Activated CD8-positive, alpha-beta memory T cell treated with anti-CD3 and anti-CD28 coated beads, Interleukin-2, amount 10 ng/mL, durations not matched to agents 7 days and 5 days (primary cell): ENCODE measurements at regions of chr1 and their contacts with region 1.

Region 1: DNA sequence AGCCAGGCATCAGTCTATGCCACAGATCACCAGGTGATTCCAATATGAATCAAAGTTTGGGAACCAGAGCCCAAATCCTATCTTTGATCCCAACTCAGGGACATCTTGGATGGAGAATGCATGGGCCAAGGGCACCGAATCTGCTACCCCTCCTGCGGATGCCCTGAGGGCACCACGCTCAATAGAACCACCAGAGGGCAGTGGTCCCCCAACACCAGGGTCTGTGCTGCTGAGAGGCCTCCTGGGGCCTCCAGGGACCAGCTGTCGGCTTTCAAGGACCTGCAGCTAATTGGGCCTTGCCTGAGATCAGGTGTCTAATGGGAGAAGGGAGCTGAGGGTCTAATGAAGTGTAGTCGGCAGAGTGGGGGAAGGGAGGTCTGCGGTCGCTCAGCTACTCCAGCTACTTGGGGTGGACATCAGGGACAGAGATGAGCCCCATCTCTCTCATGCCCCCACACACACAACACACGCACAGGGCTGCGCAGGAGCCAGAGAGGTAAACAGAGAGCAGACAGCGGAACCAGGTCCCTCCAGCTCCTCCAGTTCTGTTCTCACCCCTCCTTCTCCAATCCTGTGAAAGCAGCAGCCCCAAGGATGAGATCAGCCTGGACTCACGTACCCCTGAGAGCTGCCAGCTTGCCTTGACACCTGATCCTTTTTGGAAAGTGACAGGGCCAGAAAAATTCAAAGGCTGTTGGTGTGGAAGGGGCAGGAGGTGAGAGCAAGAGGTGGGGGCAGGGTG is 34.9 kb upstream of the PPP1R15B start:
- DNase-seq: peak; percentile 84
- ATAC-seq: peak; percentile 93
- H3K4me3 Mint-ChIP-seq: no peak overlapping the region
- H3K27ac Mint-ChIP-seq: peak overlapping the region; percentile 74
- H3K4me1 Mint-ChIP-seq: peaks cover 33% of the 10 kb centered on the region
- H3K27me3 Mint-ChIP-seq: no peaks in the 10 kb centered on the region

Region 2: DNA sequence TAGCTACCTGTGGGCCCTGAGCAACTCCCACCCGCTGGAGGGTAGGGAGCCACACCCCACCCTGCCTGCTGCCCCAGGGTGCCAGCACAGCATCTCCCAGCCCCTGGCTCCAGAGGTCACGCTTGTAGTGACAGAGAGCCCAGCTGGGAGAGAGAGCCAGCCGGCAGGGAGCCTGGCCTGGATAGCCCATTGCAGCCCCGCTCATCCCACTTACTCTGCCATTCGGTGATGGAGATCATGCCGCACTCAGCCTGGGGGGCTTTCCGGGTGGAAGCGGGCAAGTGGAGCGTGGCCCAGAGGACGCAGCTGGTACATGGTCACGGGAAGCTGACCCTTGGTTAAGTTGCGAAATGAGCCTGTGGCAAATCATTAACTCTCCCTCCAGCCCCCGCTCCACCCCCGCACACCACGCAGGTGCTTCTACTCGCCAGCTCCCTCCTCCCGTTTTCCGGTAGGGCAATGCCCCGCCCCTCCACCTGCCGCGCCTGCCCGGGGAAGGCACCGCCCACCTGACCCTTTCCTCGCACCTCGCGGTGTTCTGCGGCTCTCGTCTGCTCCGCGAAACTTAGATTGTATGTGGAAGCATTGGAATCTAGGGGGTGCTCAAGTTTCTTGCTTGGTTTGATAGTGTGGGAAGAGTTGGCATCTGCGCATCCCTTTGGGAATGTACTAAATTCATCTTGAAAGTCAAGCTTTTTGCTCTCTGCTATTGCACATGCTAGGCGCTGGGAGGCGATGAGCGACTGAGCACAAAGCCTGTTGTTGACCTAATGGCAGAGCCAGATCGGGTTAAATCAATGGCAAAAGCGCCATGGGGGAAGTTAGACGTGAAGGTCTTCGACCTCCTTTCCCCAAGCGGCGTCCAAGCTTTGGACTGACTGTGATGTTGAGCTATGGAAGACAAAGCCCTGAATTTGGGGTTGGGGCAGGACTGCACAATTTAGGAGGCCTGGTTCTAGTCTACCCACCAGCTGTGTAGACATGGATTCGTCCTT is 232.6 kb before region 1 on chr1 and contains the start of gene GOLT1A:
- CTCF ChIA-PET with region 1: no interaction called
- DNase-seq: peak; percentile 53
- ATAC-seq: peak; percentile 42
- H3K4me3 Mint-ChIP-seq: peak within 1 kb of the TSS; percentile 5
- H3K27ac Mint-ChIP-seq: no peak within 1 kb of the TSS
- H3K4me1 Mint-ChIP-seq: peaks cover 15% of the 10 kb centered on the region
- H3K27me3 Mint-ChIP-seq: peaks cover 23% of the 10 kb centered on the region
- total RNA-seq, gene GOLT1A: not detected

Region 3: GRCh38 chr1:204431310-204432165 is 15.0 kb before region 1 on chr1:
- CTCF ChIA-PET with region 1: interaction called, 174 read pairs
- DNase-seq: peak; percentile 85
- ATAC-seq: peak; percentile 88
- H3K4me3 Mint-ChIP-seq: no peak overlapping the region
- H3K27ac Mint-ChIP-seq: peak overlapping the region; percentile 20
- H3K4me1 Mint-ChIP-seq: no peaks in the 10 kb centered on the region
- H3K27me3 Mint-ChIP-seq: no peaks in the 10 kb centered on the region

Region 4: DNA sequence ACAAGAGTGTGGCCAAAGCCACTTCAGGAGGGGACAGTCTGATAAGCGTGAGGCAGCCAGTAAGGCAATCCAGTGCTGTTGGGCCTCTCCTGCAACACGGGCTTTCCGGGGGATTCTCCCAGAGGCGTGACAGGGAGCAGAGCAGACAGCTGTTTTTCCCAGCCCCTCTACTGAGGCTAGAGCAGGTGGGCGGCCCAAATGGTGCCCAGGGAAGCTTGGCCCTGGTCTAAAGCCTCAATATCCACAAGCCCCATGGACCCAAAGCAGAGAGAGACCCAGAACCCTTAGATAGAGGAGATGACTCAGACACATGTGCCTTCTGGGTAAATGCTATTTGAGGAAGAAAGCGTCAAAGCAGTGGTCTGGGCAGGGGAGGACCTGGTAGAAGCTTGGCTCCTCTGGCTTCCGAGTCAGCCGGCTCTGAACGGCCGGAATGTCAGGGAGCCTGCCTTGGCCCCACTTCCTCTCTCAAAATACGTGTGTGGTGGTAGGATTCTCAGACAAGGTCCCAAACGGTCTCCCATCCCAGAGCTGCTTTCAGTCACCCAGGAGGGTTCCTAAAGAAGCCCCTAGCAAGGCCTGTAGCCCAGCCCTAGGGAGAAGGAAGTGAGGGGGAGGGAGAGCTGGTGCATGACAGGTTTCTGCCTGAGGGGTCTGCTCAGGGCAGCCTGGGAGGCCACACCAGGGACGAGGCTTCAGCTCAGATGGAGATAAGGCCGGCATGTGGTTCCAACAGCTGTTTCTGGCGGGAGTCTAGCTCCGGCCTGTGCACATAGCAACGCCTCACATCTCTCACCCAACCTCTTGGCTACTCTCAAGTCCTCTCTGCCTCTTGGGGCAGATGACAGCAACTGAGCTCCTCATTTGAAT is 19.2 kb after region 1 on chr1:
- CTCF ChIA-PET with region 1: interaction called, 20 read pairs
- DNase-seq: no peak
- ATAC-seq: no peak
- H3K4me3 Mint-ChIP-seq: no peak overlapping the region
- H3K27ac Mint-ChIP-seq: no peak overlapping the region
- H3K4me1 Mint-ChIP-seq: peaks cover 44% of the 10 kb centered on the region
- H3K27me3 Mint-ChIP-seq: no peaks in the 10 kb centered on the region

Region 5: DNA sequence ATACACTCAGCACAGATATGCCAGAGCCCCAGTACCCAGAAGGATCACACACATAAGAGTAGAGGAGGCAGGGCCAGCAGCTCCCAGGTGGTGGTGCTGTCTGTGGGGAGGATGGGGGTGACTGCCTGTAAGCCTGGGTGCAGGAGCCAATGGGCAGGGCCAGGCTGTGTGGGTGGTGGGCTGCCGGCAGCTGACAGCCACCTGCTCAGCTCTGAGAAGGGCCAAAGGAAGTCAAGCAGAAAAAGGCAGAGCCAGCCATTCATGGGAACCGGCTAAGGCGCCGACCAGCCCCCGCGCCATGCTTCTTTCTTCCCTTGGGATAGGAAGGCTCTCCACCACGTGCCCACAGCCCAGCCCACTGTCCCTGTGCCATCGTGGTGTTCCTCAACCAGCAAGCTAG is 34.0 kb after region 1 on chr1:
- CTCF ChIA-PET with region 1: interaction called, 33 read pairs
- DNase-seq: no peak
- ATAC-seq: no peak
- H3K4me3 Mint-ChIP-seq: no peak overlapping the region
- H3K27ac Mint-ChIP-seq: no peak overlapping the region
- H3K4me1 Mint-ChIP-seq: peaks cover 23% of the 10 kb centered on the region
- H3K27me3 Mint-ChIP-seq: no peaks in the 10 kb centered on the region

Region 6: GRCh38 chr1:204487256-204487615 is 40.7 kb after region 1 on chr1:
- CTCF ChIA-PET with region 1: interaction called, 918 read pairs
- DNase-seq: no peak
- ATAC-seq: no peak
- H3K4me3 Mint-ChIP-seq: no peak overlapping the region
- H3K27ac Mint-ChIP-seq: no peak overlapping the region
- H3K4me1 Mint-ChIP-seq: peaks cover 21% of the 10 kb centered on the region
- H3K27me3 Mint-ChIP-seq: no peaks in the 10 kb centered on the region

Region 7: GRCh38 chr1:204494281-204495077 is 47.9 kb after region 1 on chr1 and contains the start of gene PIK3C2B:
- CTCF ChIA-PET with region 1: interaction called, 918 read pairs
- DNase-seq: peak; percentile 84
- ATAC-seq: peak; percentile 89
- H3K4me3 Mint-ChIP-seq: peak within 1 kb of the TSS; percentile 77
- H3K27ac Mint-ChIP-seq: peak within 1 kb of the TSS; percentile 86
- H3K4me1 Mint-ChIP-seq: peaks cover 44% of the 10 kb centered on the region
- H3K27me3 Mint-ChIP-seq: no peaks in the 10 kb centered on the region
- total RNA-seq, gene PIK3C2B: 21.6 to 26.0 TPM